ENCODE measurements at regions of chr7 and their contacts with region 1.

Region 1: DNA sequence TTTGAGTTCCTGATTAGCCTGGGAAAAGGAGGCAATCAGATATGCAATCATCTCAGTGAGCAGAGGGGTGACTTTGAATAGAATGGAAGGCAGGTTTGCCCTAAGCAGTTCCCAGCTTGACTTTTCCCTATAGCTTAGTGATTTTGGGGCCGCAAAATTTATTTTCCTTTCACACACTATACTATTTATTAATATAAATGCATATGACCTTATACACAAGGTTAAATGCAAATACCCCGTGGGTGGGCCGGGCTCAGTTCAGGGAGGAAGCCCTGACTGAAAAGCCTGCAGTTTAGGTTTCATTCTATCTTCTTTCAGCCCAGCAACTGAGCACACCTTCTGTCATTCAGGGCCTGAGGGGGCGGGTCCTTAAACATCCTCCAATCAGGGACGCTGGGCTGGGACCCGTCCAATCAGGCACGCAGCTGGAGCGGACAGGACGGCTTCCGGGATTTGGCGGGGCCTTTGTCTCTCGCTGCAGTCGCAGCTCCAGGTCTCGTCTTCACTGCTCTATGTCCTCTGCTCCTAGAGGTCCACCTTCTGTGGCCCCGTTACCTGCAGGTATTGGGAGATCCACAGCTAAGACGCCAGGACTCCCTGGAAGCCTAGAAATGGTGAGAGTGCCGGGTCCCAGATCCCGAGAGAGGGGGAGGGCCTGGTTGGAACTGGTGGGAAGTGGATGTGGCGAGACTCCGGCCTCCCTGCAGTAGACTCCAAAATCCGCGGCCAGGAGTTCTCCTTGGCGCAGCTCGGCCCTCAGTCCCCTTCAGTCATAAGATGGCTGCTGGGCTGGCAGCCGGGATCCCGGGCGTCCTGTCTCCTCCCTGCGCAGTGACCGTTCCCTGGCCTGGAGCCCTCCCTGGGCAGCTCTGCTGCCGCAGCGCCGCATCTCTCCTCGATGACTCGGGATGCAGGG is at the start of gene ZNF273:
- DNase-seq: peak; percentile 83 to 96
- H3K4me3 ChIP-seq: peak within 1 kb of the TSS; percentile 82 to 88
- H3K27ac ChIP-seq: peak within 1 kb of the TSS; percentile 73 to 85
- H3K4me1 ChIP-seq: peaks cover 0 to 5% of the 10 kb centered on the region in 2 donors
- H3K27me3 ChIP-seq: no peaks in the 10 kb centered on the region
- CTCF ChIP-seq: no peak
- total RNA-seq, gene ZNF273: 1.7 TPM

Region 2: DNA sequence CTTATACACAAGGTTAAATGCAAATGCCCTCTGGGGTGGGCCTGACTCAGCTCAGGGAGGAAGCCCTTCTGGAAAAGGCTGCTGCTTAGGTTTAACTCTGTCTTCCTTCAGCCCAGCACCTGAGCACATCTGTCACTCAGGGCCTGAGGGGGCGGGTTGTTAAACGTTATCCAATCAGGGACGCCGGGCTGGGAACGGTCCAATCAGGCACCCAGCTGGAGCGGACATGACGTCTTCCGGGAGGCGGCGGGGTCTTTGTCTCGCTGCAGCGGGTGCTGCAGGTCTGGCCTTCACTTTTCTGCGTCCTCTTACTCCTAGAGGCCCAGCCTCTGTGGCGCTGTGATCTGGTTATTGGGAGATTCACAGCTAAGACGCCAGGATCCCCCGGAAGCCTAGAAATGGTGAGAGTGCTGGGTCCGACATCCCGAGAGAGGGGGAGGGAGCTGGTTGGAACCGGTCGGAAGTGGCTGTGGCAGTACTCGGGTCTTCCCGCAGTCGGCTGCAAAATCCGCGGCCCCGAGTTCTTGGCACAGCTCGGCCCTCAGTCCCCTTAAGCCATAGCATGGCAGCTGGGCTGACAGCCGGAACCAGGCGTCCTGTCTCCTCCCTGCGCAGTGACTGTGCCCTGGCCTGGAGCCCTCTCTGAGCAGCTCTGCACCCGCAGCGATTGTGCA is 108.8 kb before region 1 on chr7 and contains the start of gene ZNF138:
- intact Hi-C with region 1: loop called (anchors 5 kb)
- DNase-seq: peak; percentile 88 to 98
- H3K4me3 ChIP-seq: peak within 1 kb of the TSS; percentile 78 to 97
- H3K27ac ChIP-seq: peak within 1 kb of the TSS; percentile 77 to 78
- H3K4me1 ChIP-seq: peaks cover 0 to 4% of the 10 kb centered on the region in 2 donors
- H3K27me3 ChIP-seq: no peaks in the 10 kb centered on the region
- CTCF ChIP-seq: no peak
- total RNA-seq, gene ZNF138: 2.0 TPM

Region 3: GRCh38 chr7:64882341-64883112 is 20.5 kb before region 1 on chr7:
- intact Hi-C with region 1: loop called (anchors 1 kb)
- DNase-seq: peak in 1 of 2 donors; percentile 79
- H3K4me3 ChIP-seq: peak overlapping the region; percentile 44 to 88
- H3K27ac ChIP-seq: no peak overlapping the region
- H3K4me1 ChIP-seq: no peaks in the 10 kb centered on the region
- H3K27me3 ChIP-seq: no peaks in the 10 kb centered on the region
- CTCF ChIP-seq: no peak

Region 4: DNA sequence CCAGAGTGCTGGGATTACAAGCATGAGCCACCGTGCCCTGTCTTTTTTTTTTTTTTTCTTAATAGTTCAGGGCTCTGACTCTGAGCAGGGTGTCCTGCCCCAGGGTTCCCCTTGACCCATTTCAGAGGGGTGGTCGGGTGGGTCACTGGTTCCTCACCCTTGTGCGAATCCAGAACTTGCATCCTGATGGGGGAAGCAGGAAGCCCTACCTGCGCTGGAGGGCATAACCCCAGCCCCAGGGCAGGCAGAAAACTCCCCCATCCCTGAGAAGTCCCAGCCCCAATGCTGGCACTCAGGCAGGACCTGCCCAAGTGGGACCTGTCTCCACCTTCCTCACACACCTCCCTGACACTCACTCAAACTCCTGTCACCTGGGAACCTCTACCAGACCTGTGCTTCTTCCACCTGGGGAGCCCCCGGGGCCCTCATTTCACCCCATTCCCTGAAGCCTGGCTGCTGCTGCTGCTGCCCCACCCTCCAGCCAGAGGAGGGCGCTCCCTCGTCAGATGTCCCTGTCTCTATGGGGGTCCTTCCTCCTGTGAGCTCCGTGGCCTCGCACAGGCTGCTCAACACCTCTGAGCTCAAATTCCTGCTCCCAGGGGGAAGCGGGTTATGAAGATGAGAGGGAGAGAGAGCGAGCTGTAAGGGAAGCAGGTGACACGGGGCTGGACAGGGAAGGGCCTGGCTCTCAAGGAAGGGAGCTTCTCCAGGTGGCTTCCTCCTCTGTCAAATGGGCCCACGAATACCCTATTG is 15.1 kb before region 1 on chr7:
- intact Hi-C with region 1: loop called (anchors 2 kb)
- DNase-seq: no peak
- H3K4me3 ChIP-seq: peak overlapping the region; percentile 51 to 56
- H3K27ac ChIP-seq: no peak overlapping the region
- H3K4me1 ChIP-seq: peaks cover 3 to 25% of the 10 kb centered on the region in 2 donors
- H3K27me3 ChIP-seq: no peaks in the 10 kb centered on the region
- CTCF ChIP-seq: peak; percentile 16 to 46 (median 33)

Region 5: DNA sequence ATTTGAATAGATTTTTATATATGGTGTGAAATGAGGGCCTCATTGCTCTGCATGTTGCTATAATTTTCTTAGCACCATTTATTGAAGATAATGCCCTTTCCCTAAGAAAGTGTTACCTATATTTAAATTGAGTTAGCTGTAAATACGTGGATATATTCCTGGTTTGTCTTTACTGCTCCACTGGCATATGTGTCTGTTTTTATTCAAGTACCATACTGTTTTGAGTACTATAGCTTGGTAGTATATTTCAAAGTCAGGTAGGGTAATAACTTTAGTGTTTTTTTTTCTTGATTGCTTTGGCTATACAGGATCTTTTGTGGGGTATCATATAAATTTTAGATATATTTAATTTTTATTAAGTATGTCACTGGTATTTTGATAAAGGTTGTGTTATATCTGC is 31.4 kb after region 1 on chr7:
- intact Hi-C with region 1: no loop called
- DNase-seq: no peak
- H3K4me3 ChIP-seq: no peak overlapping the region
- H3K27ac ChIP-seq: no peak overlapping the region
- H3K4me1 ChIP-seq: no peaks in the 10 kb centered on the region
- H3K27me3 ChIP-seq: no peaks in the 10 kb centered on the region
- CTCF ChIP-seq: no peak

Region 6: GRCh38 chr7:65411249-65411648 is 508.2 kb after region 1 on chr7:
- intact Hi-C with region 1: no loop called
- DNase-seq: no peak
- H3K4me3 ChIP-seq: no peak overlapping the region
- H3K27ac ChIP-seq: no peak overlapping the region
- H3K4me1 ChIP-seq: no peaks in the 10 kb centered on the region
- H3K27me3 ChIP-seq: no peaks in the 10 kb centered on the region
- CTCF ChIP-seq: no peak

Measured in ascending aorta (tissue), 2 donors.